A673 (cell line): ENCODE measurements at regions of chr20 and their contacts with region 1.

Region 1: GRCh38 chr20:33666293-33667244 is at the start of gene ACTL10:
- DNase-seq: peak; percentile 80
- H3K4me3 ChIP-seq: peak within 1 kb of the TSS; percentile 48
- H3K27ac ChIP-seq: peak within 1 kb of the TSS; percentile 29
- H3K4me1 ChIP-seq: peaks cover 34% of the 10 kb centered on the region
- H3K27me3 ChIP-seq: no peaks in the 10 kb centered on the region
- CTCF ChIP-seq: no peak
- total RNA-seq, gene ACTL10: 0.39 and 0.47 TPM in 2 replicates

Region 2: GRCh38 chr20:33463332-33464101 is 203.1 kb before region 1 on chr20:
- CTCF ChIA-PET with region 1: no interaction called
- POLR2A ChIA-PET with region 1: interaction called, 14 read pairs
- intact Hi-C with region 1: no loop called
- DNase-seq: no peak
- H3K4me3 ChIP-seq: no peak overlapping the region
- H3K27ac ChIP-seq: no peak overlapping the region
- H3K4me1 ChIP-seq: peaks cover 3% of the 10 kb centered on the region
- H3K27me3 ChIP-seq: no peaks in the 10 kb centered on the region
- CTCF ChIP-seq: no peak

Region 3: DNA sequence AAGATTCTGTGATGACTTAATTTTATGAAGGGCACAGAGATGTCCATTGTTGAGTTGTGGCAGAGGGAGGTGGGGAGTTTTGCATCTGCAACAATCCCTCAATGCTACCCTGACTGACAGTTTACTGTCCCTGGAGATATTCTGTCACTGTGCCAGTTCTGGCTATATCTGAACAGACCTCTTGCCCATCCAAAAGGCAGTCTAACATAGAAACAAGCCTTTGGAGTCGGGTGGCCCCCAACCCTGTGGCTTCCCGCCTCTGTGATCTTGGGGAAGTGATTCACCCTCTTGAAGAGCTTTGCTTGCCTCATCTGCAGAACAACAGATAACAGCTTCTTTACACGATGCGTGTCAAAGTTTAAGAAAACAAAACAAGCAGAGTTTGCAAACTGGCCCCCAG is 23.4 kb after region 1 on chr20:
- CTCF ChIA-PET with region 1: interaction called, 14 read pairs
- POLR2A ChIA-PET with region 1: no interaction called
- intact Hi-C with region 1: no loop called
- DNase-seq: no peak
- H3K4me3 ChIP-seq: no peak overlapping the region
- H3K27ac ChIP-seq: no peak overlapping the region
- H3K4me1 ChIP-seq: peaks cover 8% of the 10 kb centered on the region
- H3K27me3 ChIP-seq: no peaks in the 10 kb centered on the region
- CTCF ChIP-seq: no peak

Region 4: DNA sequence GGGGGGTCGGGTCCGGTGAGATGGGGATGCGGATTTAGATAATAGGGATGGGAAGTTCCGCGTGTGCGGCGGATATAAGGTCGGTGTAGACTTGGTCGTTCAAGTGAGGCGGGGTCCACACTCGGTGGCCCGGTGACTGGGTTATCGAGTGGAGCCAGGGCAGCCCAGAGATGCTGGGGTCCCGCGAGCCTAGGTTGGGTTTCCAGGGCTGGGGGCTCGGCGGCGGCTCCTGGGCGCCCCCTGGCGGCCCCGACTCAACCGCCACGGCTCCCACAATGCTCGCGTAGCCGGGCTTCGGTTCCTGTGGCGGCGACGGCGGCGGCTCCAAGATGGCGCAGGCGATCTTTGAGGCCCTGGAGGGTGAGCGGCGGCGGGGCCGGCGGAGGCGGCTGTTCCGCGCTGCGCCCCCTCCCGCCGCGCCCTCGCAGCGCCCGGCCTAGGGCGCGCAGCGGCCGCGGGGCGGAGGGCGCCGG is 65.2 kb after region 1 on chr20 and contains the start of gene ZNF341:
- CTCF ChIA-PET with region 1: no interaction called
- POLR2A ChIA-PET with region 1: no interaction called
- intact Hi-C with region 1: no loop called
- DNase-seq: peak; percentile 94
- H3K4me3 ChIP-seq: peak within 1 kb of the TSS; percentile 52
- H3K27ac ChIP-seq: peak within 1 kb of the TSS; percentile 81
- H3K4me1 ChIP-seq: peaks cover 27% of the 10 kb centered on the region
- H3K27me3 ChIP-seq: no peaks in the 10 kb centered on the region
- CTCF ChIP-seq: peak; percentile 86
- total RNA-seq, gene ZNF341: 4.7 and 5.0 TPM in 2 replicates

Region 5: GRCh38 chr20:34143951-34144350 is 477.4 kb after region 1 on chr20:
- CTCF ChIA-PET with region 1: no interaction called
- POLR2A ChIA-PET with region 1: no interaction called
- intact Hi-C with region 1: loop called (anchors 5 kb)
- DNase-seq: no peak
- H3K4me3 ChIP-seq: no peak overlapping the region
- H3K27ac ChIP-seq: no peak overlapping the region
- H3K4me1 ChIP-seq: no peaks in the 10 kb centered on the region
- H3K27me3 ChIP-seq: no peaks in the 10 kb centered on the region
- CTCF ChIP-seq: no peak